Activated CD4-positive, alpha-beta T cell treated with anti-CD3 and anti-CD28 coated beads for 36 hours (primary cell): ENCODE measurements at regions of chr5 and their contacts with region 1.

Region 1: GRCh38 chr5:107571621-107572536 is 98.9 kb downstream of the EFNA5 start:
- DNase-seq: peak; percentile 94
- ATAC-seq: peak; percentile 90
- H3K4me3 Mint-ChIP-seq: peak overlapping the region; percentile 67
- H3K27ac Mint-ChIP-seq: peak overlapping the region; percentile 51
- H3K4me1 Mint-ChIP-seq: peaks cover 17% of the 10 kb centered on the region
- H3K27me3 Mint-ChIP-seq: peaks cover 11% of the 10 kb centered on the region

Region 2: GRCh38 chr5:107149243-107150005 is 422.5 kb before region 1 on chr5:
- CTCF ChIA-PET with region 1: no interaction called
- POLR2A ChIA-PET with region 1: no interaction called
- intact Hi-C with region 1: no loop called
- DNase-seq: no peak
- ATAC-seq: no peak
- H3K4me3 Mint-ChIP-seq: no peak overlapping the region
- H3K27ac Mint-ChIP-seq: no peak overlapping the region
- H3K4me1 Mint-ChIP-seq: no peaks in the 10 kb centered on the region
- H3K27me3 Mint-ChIP-seq: no peaks in the 10 kb centered on the region

Region 3: GRCh38 chr5:107361945-107362344 is 209.9 kb before region 1 on chr5:
- CTCF ChIA-PET with region 1: interaction called, 4 read pairs
- POLR2A ChIA-PET with region 1: no interaction called
- intact Hi-C with region 1: loop called in 1 of 2 experiments (anchors 5 kb)
- DNase-seq: no peak
- ATAC-seq: no peak
- H3K4me3 Mint-ChIP-seq: no peak overlapping the region
- H3K27ac Mint-ChIP-seq: no peak overlapping the region
- H3K4me1 Mint-ChIP-seq: peaks cover 7% of the 10 kb centered on the region
- H3K27me3 Mint-ChIP-seq: peaks cover 3% of the 10 kb centered on the region

Region 4: GRCh38 chr5:107486489-107486888 is 85.4 kb before region 1 on chr5:
- CTCF ChIA-PET with region 1: interaction called, 4 read pairs
- POLR2A ChIA-PET with region 1: no interaction called
- intact Hi-C with region 1: loop called (anchors 2 to 5 kb)
- DNase-seq: peak; percentile 79
- ATAC-seq: peak; percentile 99
- H3K4me3 Mint-ChIP-seq: no peak overlapping the region
- H3K27ac Mint-ChIP-seq: no peak overlapping the region
- H3K4me1 Mint-ChIP-seq: peaks cover 22% of the 10 kb centered on the region
- H3K27me3 Mint-ChIP-seq: peaks cover 19% of the 10 kb centered on the region

Region 5: GRCh38 chr5:107673368-107674136 is 101.7 kb after region 1 on chr5:
- CTCF ChIA-PET with region 1: interaction called, 3 read pairs
- POLR2A ChIA-PET with region 1: no interaction called
- intact Hi-C with region 1: loop called (anchors 1 to 5 kb)
- DNase-seq: peak; percentile 90
- ATAC-seq: peak; percentile 76
- H3K4me3 Mint-ChIP-seq: peak overlapping the region; percentile 67
- H3K27ac Mint-ChIP-seq: no peak overlapping the region
- H3K4me1 Mint-ChIP-seq: peaks cover 31% of the 10 kb centered on the region
- H3K27me3 Mint-ChIP-seq: peaks cover 56% of the 10 kb centered on the region